ENCODE measurements at regions of chr10 and their contacts with region 1.

Region 1: DNA sequence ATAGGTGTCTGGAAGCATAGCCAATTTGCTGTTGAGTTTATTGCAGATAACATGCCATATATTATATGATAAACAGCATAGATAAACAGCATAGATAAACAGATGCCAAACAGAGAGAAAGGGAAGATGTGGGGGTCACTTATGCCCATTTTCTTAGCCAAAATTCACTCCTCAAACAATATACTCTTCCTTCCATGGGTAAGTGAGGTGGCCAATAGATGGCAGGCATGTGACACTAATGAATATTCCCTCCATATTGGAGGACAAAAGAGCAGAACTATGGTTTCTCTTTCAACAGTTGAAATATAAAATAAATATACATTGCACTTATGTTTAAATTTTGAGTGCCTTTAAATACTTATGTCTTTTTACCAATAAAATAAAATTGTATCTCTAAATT is 1212.8 kb downstream of the REEP3 start:
- DNase-seq: peak; percentile 65
- H3K4me3 Mint-ChIP-seq: no peak overlapping the region
- H3K27ac Mint-ChIP-seq: no peak overlapping the region
- H3K4me1 Mint-ChIP-seq: peaks cover 30% of the 10 kb centered on the region
- H3K27me3 Mint-ChIP-seq: no peaks in the 10 kb centered on the region
- CTCF ChIP-seq: peak; percentile 52

Region 2: GRCh38 chr10:64115913-64116643 is 617.9 kb before region 1 on chr10:
- CTCF ChIA-PET with region 1: no interaction called
- intact Hi-C with region 1: loop called (anchors 10 kb)
- DNase-seq: peak; percentile 54
- H3K4me3 Mint-ChIP-seq: no peak overlapping the region
- H3K27ac Mint-ChIP-seq: no peak overlapping the region
- H3K4me1 Mint-ChIP-seq: peaks cover 26% of the 10 kb centered on the region
- H3K27me3 Mint-ChIP-seq: no peaks in the 10 kb centered on the region
- CTCF ChIP-seq: peak; percentile 40

Region 3: GRCh38 chr10:64508029-64508661 is 225.8 kb before region 1 on chr10:
- CTCF ChIA-PET with region 1: no interaction called
- intact Hi-C with region 1: loop called (anchors 5 kb)
- DNase-seq: no peak
- H3K4me3 Mint-ChIP-seq: no peak overlapping the region
- H3K27ac Mint-ChIP-seq: peak overlapping the region; percentile 67
- H3K4me1 Mint-ChIP-seq: peaks cover 45% of the 10 kb centered on the region
- H3K27me3 Mint-ChIP-seq: no peaks in the 10 kb centered on the region
- CTCF ChIP-seq: no peak

Region 4: DNA sequence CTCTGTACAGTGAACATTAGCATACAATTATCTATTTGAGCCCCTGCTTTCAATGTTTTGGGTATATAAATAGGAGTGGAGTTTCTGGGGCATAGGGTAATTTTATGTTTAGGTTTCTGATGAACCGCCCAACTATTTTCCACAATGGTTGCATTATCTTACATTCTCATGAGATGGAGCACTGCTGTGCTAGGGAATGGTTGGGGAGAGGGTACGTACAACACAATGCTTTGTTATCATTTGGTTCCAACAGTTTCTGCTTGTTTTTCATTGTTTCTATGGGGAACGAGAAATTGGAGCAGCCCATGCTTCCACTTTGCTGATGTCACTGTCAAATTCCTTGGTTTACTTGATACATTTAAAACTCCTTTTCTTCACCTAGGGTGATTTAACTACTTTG is 97.5 kb before region 1 on chr10:
- CTCF ChIA-PET with region 1: no interaction called
- intact Hi-C with region 1: no loop called
- DNase-seq: no peak
- H3K4me3 Mint-ChIP-seq: no peak overlapping the region
- H3K27ac Mint-ChIP-seq: no peak overlapping the region
- H3K4me1 Mint-ChIP-seq: peaks cover 1% of the 10 kb centered on the region
- H3K27me3 Mint-ChIP-seq: no peaks in the 10 kb centered on the region
- CTCF ChIP-seq: no peak

Region 5: GRCh38 chr10:64658528-64658927 is 75.5 kb before region 1 on chr10:
- CTCF ChIA-PET with region 1: no interaction called
- intact Hi-C with region 1: no loop called
- DNase-seq: no peak
- H3K4me3 Mint-ChIP-seq: no peak overlapping the region
- H3K27ac Mint-ChIP-seq: no peak overlapping the region
- H3K4me1 Mint-ChIP-seq: no peaks in the 10 kb centered on the region
- H3K27me3 Mint-ChIP-seq: no peaks in the 10 kb centered on the region
- CTCF ChIP-seq: no peak

Region 6: DNA sequence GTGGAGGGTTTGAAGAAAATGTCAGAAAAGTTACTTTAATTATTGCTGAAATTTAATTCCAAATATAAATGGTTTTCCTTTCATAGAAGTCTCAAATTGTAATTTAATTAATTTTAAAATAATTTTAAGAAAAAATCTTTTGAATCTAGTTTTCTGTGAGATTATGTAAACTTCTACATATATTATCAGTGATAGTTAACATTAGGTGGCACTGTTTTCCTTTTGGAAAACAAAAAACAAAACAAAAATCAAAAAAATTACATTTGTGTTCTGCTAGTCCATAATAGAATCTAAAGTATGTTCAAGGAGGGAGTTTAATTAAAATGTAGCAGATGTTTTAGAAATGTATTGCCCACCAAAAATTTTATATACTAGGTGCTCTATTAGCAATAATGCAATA is 243.9 kb after region 1 on chr10:
- CTCF ChIA-PET with region 1: no interaction called
- intact Hi-C with region 1: loop called (anchors 5 kb)
- DNase-seq: no peak
- H3K4me3 Mint-ChIP-seq: no peak overlapping the region
- H3K27ac Mint-ChIP-seq: no peak overlapping the region
- H3K4me1 Mint-ChIP-seq: no peaks in the 10 kb centered on the region
- H3K27me3 Mint-ChIP-seq: no peaks in the 10 kb centered on the region
- CTCF ChIP-seq: no peak

Region 7: GRCh38 chr10:65341323-65341925 is 607.4 kb after region 1 on chr10:
- CTCF ChIA-PET with region 1: no interaction called
- intact Hi-C with region 1: loop called (anchors 1 kb)
- DNase-seq: peak; percentile 12
- H3K4me3 Mint-ChIP-seq: no peak overlapping the region
- H3K27ac Mint-ChIP-seq: no peak overlapping the region
- H3K4me1 Mint-ChIP-seq: peaks cover 22% of the 10 kb centered on the region
- H3K27me3 Mint-ChIP-seq: no peaks in the 10 kb centered on the region
- CTCF ChIP-seq: no peak

Region 8: GRCh38 chr10:66180581-66181318 is 1446.8 kb after region 1 on chr10:
- CTCF ChIA-PET with region 1: no interaction called
- intact Hi-C with region 1: loop called (anchors 1 kb)
- DNase-seq: peak; percentile 36
- H3K4me3 Mint-ChIP-seq: no peak overlapping the region
- H3K27ac Mint-ChIP-seq: no peak overlapping the region
- H3K4me1 Mint-ChIP-seq: peaks cover 9% of the 10 kb centered on the region
- H3K27me3 Mint-ChIP-seq: no peaks in the 10 kb centered on the region
- CTCF ChIP-seq: peak; percentile 36

Measured in Calu3 (cell line).